Body of pancreas (tissue), 4 donors: ENCODE measurements at regions of chr7 and their contacts with region 1.

Region 1: GRCh38 chr7:76314042-76314721 is 11.7 kb downstream of the HSPB1 start:
- DNase-seq: peak; percentile 97 to 98 (median 98)
- ATAC-seq: peak; percentile 70
- H3K4me3 ChIP-seq: no peak overlapping the region
- H3K27ac ChIP-seq: no peak overlapping the region
- H3K4me1 ChIP-seq: peaks cover 40% of the 10 kb centered on the region
- H3K27me3 ChIP-seq: no peaks in the 10 kb centered on the region
- CTCF ChIP-seq: peak; percentile 100
- POLR2A ChIP-seq: no peak

Region 2: GRCh38 chr7:76179686-76180085 is 134.5 kb before region 1 on chr7:
- intact Hi-C with region 1: loop called (anchors 5 kb)
- DNase-seq: no peak
- ATAC-seq: no peak
- H3K4me3 ChIP-seq: no peak overlapping the region
- H3K27ac ChIP-seq: no peak overlapping the region
- H3K4me1 ChIP-seq: peaks cover 8% of the 10 kb centered on the region
- H3K27me3 ChIP-seq: no peaks in the 10 kb centered on the region
- CTCF ChIP-seq: no peak
- POLR2A ChIP-seq: no peak

Region 3: GRCh38 chr7:76515999-76516443 is 201.8 kb after region 1 on chr7:
- intact Hi-C with region 1: no loop called
- DNase-seq: peak in 2 of 4 donors; percentile 32 to 62
- ATAC-seq: no peak
- H3K4me3 ChIP-seq: no peak overlapping the region
- H3K27ac ChIP-seq: no peak overlapping the region
- H3K4me1 ChIP-seq: peaks cover 4% of the 10 kb centered on the region
- H3K27me3 ChIP-seq: no peaks in the 10 kb centered on the region
- CTCF ChIP-seq: peak in 3 of 7 experiments; percentile 54 to 87 (median 68)
- POLR2A ChIP-seq: no peak